SK-N-SH (cell line): ENCODE measurements at regions of chr7 and their contacts with region 1.

Region 1: DNA sequence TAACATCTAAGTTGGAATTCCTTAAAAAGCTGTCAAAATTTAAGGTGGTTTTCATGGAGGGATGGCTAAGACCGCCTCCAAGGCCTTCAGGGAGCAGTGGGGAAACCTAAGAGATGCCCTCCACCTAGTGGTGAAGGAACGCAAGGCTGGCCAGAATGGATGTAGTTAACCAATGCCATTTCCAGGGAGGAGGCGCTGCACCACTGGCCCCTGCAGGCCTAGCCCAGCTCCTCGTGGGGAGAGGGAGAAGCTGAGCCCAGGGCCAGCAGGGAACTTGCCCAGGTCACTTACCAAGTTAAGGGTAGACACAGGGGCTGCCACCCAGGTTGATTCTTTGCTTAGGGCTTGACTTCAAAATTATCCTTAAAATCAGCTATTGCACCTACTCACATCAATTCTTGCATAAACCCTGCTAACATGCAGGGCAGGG is 32.0 kb downstream of the FIGNL1 start:
- DNase-seq: peak; percentile 86
- H3K4me3 ChIP-seq: no peak overlapping the region
- H3K27ac ChIP-seq: no peak overlapping the region
- H3K4me1 ChIP-seq: peaks cover 0 to 10% of the 10 kb centered on the region in 2 experiments; a peak in 1 of 4 replicates
- H3K27me3 ChIP-seq: no peaks in the 10 kb centered on the region
- CTCF ChIP-seq: peak; percentile 96
- EP300 ChIP-seq: no peak
- RAD21 ChIP-seq: peak; percentile 98

Region 2: GRCh38 chr7:50142425-50143017 is 275.6 kb before region 1 on chr7:
- CTCF ChIA-PET with region 1: interaction called, 71 read pairs
- POLR2A ChIA-PET with region 1: no interaction called
- DNase-seq: no peak
- H3K4me3 ChIP-seq: no peak overlapping the region; a peak in 1 of 4 replicates
- H3K27ac ChIP-seq: no peak overlapping the region
- H3K4me1 ChIP-seq: no peaks in the 10 kb centered on the region
- H3K27me3 ChIP-seq: no peaks in the 10 kb centered on the region
- CTCF ChIP-seq: peak; percentile 93
- EP300 ChIP-seq: no peak
- RAD21 ChIP-seq: peak; percentile 82

Region 3: GRCh38 chr7:50185951-50186682 is 232.0 kb before region 1 on chr7:
- CTCF ChIA-PET with region 1: interaction called, 12 read pairs
- POLR2A ChIA-PET with region 1: no interaction called
- DNase-seq: no peak
- H3K4me3 ChIP-seq: no peak overlapping the region
- H3K27ac ChIP-seq: no peak overlapping the region
- H3K4me1 ChIP-seq: no peaks in the 10 kb centered on the region
- H3K27me3 ChIP-seq: no peaks in the 10 kb centered on the region
- CTCF ChIP-seq: no peak
- EP300 ChIP-seq: no peak
- RAD21 ChIP-seq: no peak

Region 4: GRCh38 chr7:50335795-50336754 is 82.0 kb before region 1 on chr7:
- CTCF ChIA-PET with region 1: interaction called, 14 read pairs
- POLR2A ChIA-PET with region 1: no interaction called
- DNase-seq: peak; percentile 78
- H3K4me3 ChIP-seq: no peak overlapping the region
- H3K27ac ChIP-seq: no peak overlapping the region
- H3K4me1 ChIP-seq: peaks cover 5 to 22% of the 10 kb centered on the region in 2 experiments; a peak in 2 of 4 replicates
- H3K27me3 ChIP-seq: no peaks in the 10 kb centered on the region
- CTCF ChIP-seq: no peak
- EP300 ChIP-seq: peak in 1 of 2 experiments; percentile 84; a peak in 2 of 4 replicates
- RAD21 ChIP-seq: peak; percentile 69

Region 5: GRCh38 chr7:50382455-50382854 is 35.6 kb before region 1 on chr7:
- CTCF ChIA-PET with region 1: interaction called, 15 read pairs
- POLR2A ChIA-PET with region 1: no interaction called
- DNase-seq: no peak
- H3K4me3 ChIP-seq: no peak overlapping the region
- H3K27ac ChIP-seq: no peak overlapping the region
- H3K4me1 ChIP-seq: peaks cover 0 to 10% of the 10 kb centered on the region in 2 experiments; a peak in 1 of 4 replicates
- H3K27me3 ChIP-seq: peaks cover 15% of the 10 kb centered on the region
- CTCF ChIP-seq: no peak
- EP300 ChIP-seq: no peak
- RAD21 ChIP-seq: no peak

Region 6: DNA sequence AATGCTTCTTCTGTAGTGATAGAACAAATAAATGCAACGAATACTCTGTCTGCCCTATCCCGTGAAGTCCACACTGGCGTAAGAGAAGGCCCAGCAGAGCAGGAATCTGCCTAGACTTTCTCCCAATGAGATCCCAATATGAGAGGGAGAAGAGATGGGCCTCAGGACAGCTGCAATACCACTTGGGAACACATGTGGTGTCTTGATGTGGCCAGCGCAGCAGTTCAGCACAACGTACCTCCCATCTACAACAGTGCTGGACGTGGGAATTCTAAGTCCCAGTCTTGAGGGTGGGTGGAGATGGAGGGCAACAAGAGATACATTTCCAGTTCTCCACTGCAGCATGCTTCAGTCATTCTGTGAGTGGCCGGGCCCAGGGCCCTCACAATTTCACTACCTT is 13.7 kb before region 1 on chr7:
- CTCF ChIA-PET with region 1: interaction called, 71 read pairs
- POLR2A ChIA-PET with region 1: no interaction called
- DNase-seq: peak; percentile 57
- H3K4me3 ChIP-seq: no peak overlapping the region
- H3K27ac ChIP-seq: no peak overlapping the region
- H3K4me1 ChIP-seq: peaks cover 0 to 9% of the 10 kb centered on the region in 2 experiments; a peak in 1 of 4 replicates
- H3K27me3 ChIP-seq: peaks cover 51% of the 10 kb centered on the region
- CTCF ChIP-seq: peak; percentile 22; the same call in 1 of the 2 replicates
- EP300 ChIP-seq: no peak
- RAD21 ChIP-seq: no peak

Region 7: GRCh38 chr7:50679218-50680007 is 261.3 kb after region 1 on chr7:
- CTCF ChIA-PET with region 1: interaction called, 31 read pairs
- POLR2A ChIA-PET with region 1: no interaction called
- DNase-seq: peak; percentile 80
- H3K4me3 ChIP-seq: no peak overlapping the region
- H3K27ac ChIP-seq: no peak overlapping the region
- H3K4me1 ChIP-seq: peaks cover 0 to 22% of the 10 kb centered on the region in 2 experiments; a peak in 2 of 4 replicates
- H3K27me3 ChIP-seq: no peaks in the 10 kb centered on the region
- CTCF ChIP-seq: peak; percentile 68
- EP300 ChIP-seq: no peak
- RAD21 ChIP-seq: peak; percentile 99